ENCODE measurements at regions of chr2 and their contacts with region 1.

Region 1: DNA sequence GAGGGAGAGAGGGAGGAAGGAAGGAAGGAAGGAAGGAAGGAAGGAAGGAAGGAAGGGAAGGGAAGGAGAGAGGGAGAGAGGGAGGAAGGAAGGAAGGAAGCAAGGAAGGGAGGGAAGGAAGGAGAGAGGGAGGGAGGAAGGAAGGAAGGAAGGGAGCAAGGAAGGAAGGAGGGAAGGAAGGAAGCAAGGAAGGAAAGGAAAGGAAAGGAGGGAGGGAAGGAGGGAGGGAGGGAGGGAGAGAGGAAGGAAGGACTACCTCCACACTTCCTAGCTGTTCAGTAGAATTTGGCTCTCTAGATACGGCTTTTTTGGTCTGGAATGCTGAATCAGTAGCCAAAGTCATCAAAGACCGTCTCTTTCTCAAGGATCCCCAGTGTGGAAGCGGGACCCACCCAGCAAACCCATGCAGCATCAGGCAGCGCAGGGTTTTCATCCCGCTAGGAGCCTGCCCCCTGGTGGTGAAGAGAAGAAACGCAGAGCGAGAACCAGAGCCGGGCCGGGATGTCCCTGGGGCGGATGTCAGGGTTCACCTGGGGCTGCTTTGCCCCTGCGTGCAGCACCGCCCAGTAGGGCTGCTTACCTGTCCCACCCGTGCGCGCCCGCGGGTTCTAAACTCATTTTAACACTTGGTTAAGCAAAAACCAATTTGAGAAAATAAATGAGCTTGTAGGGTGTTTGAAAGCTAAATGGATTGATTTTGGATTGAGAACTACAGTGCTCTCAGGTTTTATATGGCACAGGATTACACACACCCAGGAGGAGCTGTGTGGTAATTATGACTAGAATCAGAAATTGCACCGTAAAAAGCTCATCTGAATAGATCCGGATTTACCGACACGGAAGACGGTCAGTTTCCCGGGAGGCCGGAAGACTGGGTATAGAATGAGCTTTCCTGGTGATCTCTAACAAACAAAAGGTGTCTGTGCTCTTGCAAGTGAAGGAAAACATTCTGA is 48.1 kb upstream of the ARL4C start:
- DNase-seq: peak; percentile 14 to 83
- H3K4me3 ChIP-seq: no peak overlapping the region
- H3K4me1 ChIP-seq: 0 out of 2 replicates have a peak, but pooled peaks cover 2% of the 10 kb centered on the region
- H3K27me3 ChIP-seq: no peaks in the 10 kb centered on the region

Region 2: GRCh38 chr2:233976690-233977294 is 568.1 kb before region 1 on chr2:
- in situ Hi-C with region 1: loop called (anchors 25 kb)
- DNase-seq: peak in 1 of 2 experiments; percentile 11
- H3K4me3 ChIP-seq: no peak overlapping the region
- H3K4me1 ChIP-seq: no peaks in the 10 kb centered on the region
- H3K27me3 ChIP-seq: peaks cover 10% of the 10 kb centered on the region; the same call in 1 of the 2 replicates